ENCODE measurements at regions of chr9 and their contacts with region 1.

Region 1: GRCh38 chr9:126927419-126927818 is 12.8 kb downstream of the RALGPS1 start:
- DNase-seq: no peak
- H3K4me3 ChIP-seq: no peak overlapping the region
- H3K27ac ChIP-seq: no peak overlapping the region
- H3K4me1 ChIP-seq: no peaks in the 10 kb centered on the region; a peak in 1 of 7 replicates
- H3K27me3 ChIP-seq: peaks cover 0 to 6% (median 0%) of the 10 kb centered on the region in 4 experiments; a peak in 2 of 7 replicates
- CTCF ChIP-seq: no peak
- EP300 ChIP-seq: no peak
- POLR2A ChIP-seq: no peak
- RAD21 ChIP-seq: no peak

Region 2: GRCh38 chr9:126914458-126915280 is 12.8 kb before region 1 on chr9 and contains the start of gene RALGPS1:
- CTCF ChIA-PET with region 1: interaction called, 15 read pairs
- POLR2A ChIA-PET with region 1: interaction called, 4 read pairs
- DNase-seq: peak; percentile 91 to 92
- H3K4me3 ChIP-seq: peak within 1 kb of the TSS; percentile 61 to 85 (median 69)
- H3K27ac ChIP-seq: no peak within 1 kb of the TSS
- H3K4me1 ChIP-seq: peaks cover 6 to 19% (median 12%) of the 10 kb centered on the region in 4 experiments
- H3K27me3 ChIP-seq: peaks cover 0 to 11% (median 2%) of the 10 kb centered on the region in 4 experiments; a peak in 3 of 7 replicates
- CTCF ChIP-seq: no peak
- EP300 ChIP-seq: no peak
- POLR2A ChIP-seq: peak in 1 of 2 experiments; percentile 62; a peak in 2 of 3 replicates
- RAD21 ChIP-seq: no peak
- total RNA-seq, gene RALGPS1: 22.9 and 23.5 TPM in 2 replicates

Measured in H1 (cell line).